ENCODE measurements at regions of chr5 and their contacts with region 1.

Region 1: GRCh38 chr5:64347309-64347708 is 158.5 kb upstream of the RGS7BP start:
- H3K4me3 ChIP-seq: no peak overlapping the region
- H3K27ac ChIP-seq: no peak overlapping the region
- H3K4me1 ChIP-seq: 0 out of 2 replicates have a peak, but pooled peaks cover 4% of the 10 kb centered on the region
- CTCF ChIP-seq: 0 out of 2 replicates have a peak, but pooled peaks have one; percentile 20

Region 2: DNA sequence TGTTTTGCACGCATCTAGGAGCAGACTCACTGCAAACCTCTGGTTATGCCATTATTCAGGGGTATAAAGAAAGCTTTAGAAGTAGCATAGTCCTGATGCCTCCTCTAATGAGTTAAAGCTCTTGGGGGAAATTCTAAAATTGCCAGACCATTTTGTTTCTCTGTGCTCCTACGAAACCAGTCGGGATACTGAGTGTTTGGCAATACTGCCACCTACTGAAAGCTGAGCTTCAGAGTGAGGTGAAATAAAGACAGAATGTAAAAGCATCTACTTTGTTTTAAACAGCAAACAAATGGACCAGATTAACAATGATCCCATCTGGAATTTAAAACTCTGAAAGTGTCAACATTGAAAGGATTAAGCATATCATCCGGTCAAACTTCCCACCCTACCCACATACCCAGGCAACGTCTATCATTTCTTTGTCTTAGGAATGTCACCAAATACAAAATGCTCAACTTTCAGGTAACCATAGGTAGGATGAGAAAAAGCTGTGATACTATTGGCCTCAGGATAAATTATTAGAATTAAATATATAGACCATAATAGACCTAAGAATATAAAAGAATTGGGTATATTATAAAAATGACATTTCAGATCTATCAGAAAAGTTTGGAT is 265.1 kb after region 1 on chr5:
- CTCF ChIA-PET with region 1: interaction called, 20 read pairs
- POLR2A ChIA-PET with region 1: no interaction called
- H3K4me3 ChIP-seq: no peak overlapping the region
- H3K27ac ChIP-seq: no peak overlapping the region
- H3K4me1 ChIP-seq: no peaks in the 10 kb centered on the region
- CTCF ChIP-seq: peak; percentile 56; the same call in 1 of the 2 replicates